ENCODE measurements at regions of chr20 and their contacts with region 1.

Region 1: GRCh38 chr20:8790442-8791074 is 278.3 kb upstream of the PLCB4 start:
- DNase-seq: no peak

Region 2: GRCh38 chr20:8829256-8829655 is 38.7 kb after region 1 on chr20:
- intact Hi-C with region 1: no loop called
- DNase-seq: no peak

Region 3: GRCh38 chr20:9068851-9069663 is 278.5 kb after region 1 on chr20 and contains the start of gene PLCB4:
- intact Hi-C with region 1: loop called (anchors 10 kb)
- DNase-seq: peak; percentile 78
- total RNA-seq, gene PLCB4: 20.5 TPM

Region 4: GRCh38 chr20:9172851-9173250 is 382.3 kb after region 1 on chr20:
- intact Hi-C with region 1: loop called (anchors 10 kb)
- DNase-seq: no peak

Region 5: GRCh38 chr20:9359561-9360308 is 569.2 kb after region 1 on chr20:
- intact Hi-C with region 1: loop called (anchors 5 kb)
- DNase-seq: no peak